ENCODE measurements at regions of chr13 and their contacts with region 1.

Region 1: DNA sequence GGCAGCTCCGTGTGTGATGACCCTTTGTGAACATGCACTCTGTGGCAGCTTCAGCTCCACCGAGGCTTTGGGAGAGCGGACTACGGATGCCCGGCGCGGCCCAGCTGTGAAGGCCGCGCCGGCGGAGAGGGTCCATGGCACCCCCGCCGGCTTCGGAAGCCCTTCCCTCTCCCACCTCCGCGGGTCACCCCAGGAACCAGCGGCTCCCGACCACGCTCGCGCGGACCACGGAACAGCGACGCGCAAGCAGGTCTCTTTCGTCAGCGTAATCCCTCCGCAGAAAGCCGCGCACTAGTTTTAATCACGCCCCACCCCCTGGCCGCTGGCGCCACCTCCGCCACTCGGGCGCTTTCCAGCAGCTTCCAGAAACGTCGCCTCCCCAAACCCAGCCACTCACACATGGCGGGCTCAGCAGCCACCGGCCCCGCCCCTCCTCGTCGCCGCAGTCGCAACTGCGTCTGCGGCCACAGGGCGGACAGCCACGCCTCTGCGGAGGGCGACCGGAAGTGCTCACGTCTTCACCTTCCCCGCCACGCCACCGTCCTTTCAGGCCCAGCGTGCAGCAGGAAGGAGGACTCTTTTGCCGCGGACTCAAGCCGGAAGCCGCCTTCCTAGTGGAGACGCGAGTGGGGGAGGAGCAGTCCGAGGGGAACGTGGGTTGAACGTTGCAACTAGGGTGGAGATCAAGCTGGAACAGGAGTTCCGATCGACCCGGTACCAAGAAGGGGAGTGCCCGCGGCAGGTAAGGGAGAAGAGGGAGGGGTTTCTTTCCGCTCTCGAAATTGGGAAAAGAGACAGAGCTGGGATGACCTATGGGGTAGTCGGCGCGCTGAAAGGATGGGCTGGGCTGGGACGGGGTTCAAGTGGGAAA is at the start of gene USPL1:
- DNase-seq: peak; percentile 93 to 95
- H3K4me3 ChIP-seq: peak within 1 kb of the TSS; percentile 99
- H3K27ac ChIP-seq: peak within 1 kb of the TSS; percentile 98
- H3K4me1 ChIP-seq: peaks cover 33% of the 10 kb centered on the region
- H3K27me3 ChIP-seq: no peaks in the 10 kb centered on the region
- CTCF ChIP-seq: no peak
- total RNA-seq, gene USPL1: 8.9 and 10.7 TPM in 2 replicates

Region 2: GRCh38 chr13:30422054-30422839 is 195.3 kb before region 1 on chr13 and contains the start of gene UBE2L5:
- CTCF ChIA-PET with region 1: no interaction called
- POLR2A ChIA-PET with region 1: no interaction called
- intact Hi-C with region 1: loop called (anchors 1 kb)
- DNase-seq: peak; percentile 67 to 69
- H3K4me3 ChIP-seq: peak within 1 kb of the TSS; percentile 84
- H3K27ac ChIP-seq: peak within 1 kb of the TSS; percentile 57
- H3K4me1 ChIP-seq: peaks cover 11% of the 10 kb centered on the region; the same call in 1 of the 2 replicates
- H3K27me3 ChIP-seq: no peaks in the 10 kb centered on the region
- CTCF ChIP-seq: no peak
- total RNA-seq, gene UBE2L5: not detected in 2 replicates

Region 3: GRCh38 chr13:30438286-30438685 is 179.3 kb before region 1 on chr13:
- CTCF ChIA-PET with region 1: no interaction called
- POLR2A ChIA-PET with region 1: interaction called, 33 read pairs
- intact Hi-C with region 1: no loop called
- DNase-seq: no peak
- H3K4me3 ChIP-seq: no peak overlapping the region
- H3K27ac ChIP-seq: no peak overlapping the region
- H3K4me1 ChIP-seq: no peaks in the 10 kb centered on the region
- H3K27me3 ChIP-seq: no peaks in the 10 kb centered on the region
- CTCF ChIP-seq: no peak

Region 4: GRCh38 chr13:30477346-30478195 is 140.0 kb before region 1 on chr13:
- CTCF ChIA-PET with region 1: interaction called, 13 read pairs
- POLR2A ChIA-PET with region 1: no interaction called
- intact Hi-C with region 1: no loop called
- DNase-seq: no peak
- H3K4me3 ChIP-seq: no peak overlapping the region
- H3K27ac ChIP-seq: no peak overlapping the region
- H3K4me1 ChIP-seq: no peaks in the 10 kb centered on the region
- H3K27me3 ChIP-seq: no peaks in the 10 kb centered on the region
- CTCF ChIP-seq: no peak

Region 5: DNA sequence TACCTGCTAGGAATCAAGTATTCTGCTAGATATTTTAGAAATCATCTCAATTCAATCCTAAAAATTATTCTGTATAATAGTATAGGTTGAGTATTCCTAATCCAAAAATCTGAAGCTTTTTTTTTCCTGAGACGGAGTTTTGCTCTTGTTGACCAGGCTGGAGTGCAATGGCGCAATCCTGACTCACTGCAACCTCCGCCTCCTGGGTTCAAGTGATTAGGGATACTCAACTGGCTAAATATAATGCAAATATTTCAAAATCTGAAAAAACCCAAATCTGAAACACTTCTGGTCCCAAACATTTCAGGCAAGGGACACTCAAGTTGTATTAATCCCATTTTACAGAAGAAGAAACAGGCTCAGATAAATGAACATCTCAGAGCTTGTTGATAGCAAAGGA is 17.1 kb before region 1 on chr13:
- CTCF ChIA-PET with region 1: no interaction called
- POLR2A ChIA-PET with region 1: no interaction called
- intact Hi-C with region 1: no loop called
- DNase-seq: no peak
- H3K4me3 ChIP-seq: no peak overlapping the region
- H3K27ac ChIP-seq: no peak overlapping the region
- H3K4me1 ChIP-seq: no peaks in the 10 kb centered on the region
- H3K27me3 ChIP-seq: no peaks in the 10 kb centered on the region
- CTCF ChIP-seq: no peak

Measured in PC-9 (cell line).